Uterus (tissue), 4 donors: ENCODE measurements at regions of chr4 and their contacts with region 1.

Region 1: DNA sequence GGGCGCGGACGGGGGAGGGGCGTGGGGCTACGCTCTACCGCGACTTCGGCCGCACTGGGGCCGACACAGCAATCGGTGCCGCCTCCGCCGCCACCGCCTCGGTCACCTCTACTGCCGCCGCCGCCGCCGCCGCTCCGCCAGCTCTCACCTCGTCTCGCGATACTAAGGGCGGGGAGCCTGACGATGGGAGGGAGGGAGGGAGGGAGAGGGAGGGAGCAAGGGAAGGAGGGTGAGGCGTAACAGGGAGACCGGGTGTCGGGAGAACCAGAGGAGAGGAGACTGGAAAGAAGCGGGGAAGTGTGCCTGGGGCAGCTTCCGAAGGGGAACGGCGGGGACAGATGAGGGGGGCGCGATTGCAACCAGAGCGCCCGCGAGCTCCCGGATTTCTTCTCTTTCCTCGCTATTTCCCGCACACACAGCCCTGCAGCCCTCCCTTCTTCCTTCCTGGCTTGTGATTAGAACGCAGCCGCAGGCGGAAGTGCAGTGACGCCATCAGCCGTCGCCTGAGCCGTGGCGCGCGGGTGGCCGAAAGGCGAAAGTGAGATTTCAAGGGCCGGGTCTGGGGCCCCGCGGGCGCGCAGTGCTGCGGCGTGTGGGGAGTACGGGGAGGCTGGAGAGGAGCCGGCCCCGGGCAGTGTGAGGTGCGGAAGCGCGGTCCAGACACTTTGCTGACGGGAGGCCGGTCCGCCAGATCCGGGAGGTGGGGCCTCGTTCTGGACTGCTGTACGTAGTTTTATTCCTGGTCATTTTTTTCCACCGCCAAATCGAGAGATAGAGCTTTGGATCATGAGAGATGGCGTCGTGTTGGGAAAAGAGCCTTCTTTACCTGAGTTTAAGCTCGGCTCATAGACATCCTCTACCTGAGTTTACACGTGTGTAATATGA is at the start of gene ANKRD17:
- DNase-seq: peak; percentile 91
- H3K4me3 ChIP-seq: peak within 1 kb of the TSS; percentile 62 to 98
- H3K27ac ChIP-seq: peak within 1 kb of the TSS; percentile 96 to 97
- H3K4me1 ChIP-seq: peaks cover 0 to 9% of the 10 kb centered on the region in 2 donors
- H3K27me3 ChIP-seq: no peaks in the 10 kb centered on the region
- CTCF ChIP-seq: peak in 3 of 4 experiments; percentile 31 to 56 (median 39)
- POLR2A ChIP-seq: peak; percentile 36 to 60
- total RNA-seq, gene ANKRD17: 25.0 to 75.6 (median 56.7) TPM

Region 2: DNA sequence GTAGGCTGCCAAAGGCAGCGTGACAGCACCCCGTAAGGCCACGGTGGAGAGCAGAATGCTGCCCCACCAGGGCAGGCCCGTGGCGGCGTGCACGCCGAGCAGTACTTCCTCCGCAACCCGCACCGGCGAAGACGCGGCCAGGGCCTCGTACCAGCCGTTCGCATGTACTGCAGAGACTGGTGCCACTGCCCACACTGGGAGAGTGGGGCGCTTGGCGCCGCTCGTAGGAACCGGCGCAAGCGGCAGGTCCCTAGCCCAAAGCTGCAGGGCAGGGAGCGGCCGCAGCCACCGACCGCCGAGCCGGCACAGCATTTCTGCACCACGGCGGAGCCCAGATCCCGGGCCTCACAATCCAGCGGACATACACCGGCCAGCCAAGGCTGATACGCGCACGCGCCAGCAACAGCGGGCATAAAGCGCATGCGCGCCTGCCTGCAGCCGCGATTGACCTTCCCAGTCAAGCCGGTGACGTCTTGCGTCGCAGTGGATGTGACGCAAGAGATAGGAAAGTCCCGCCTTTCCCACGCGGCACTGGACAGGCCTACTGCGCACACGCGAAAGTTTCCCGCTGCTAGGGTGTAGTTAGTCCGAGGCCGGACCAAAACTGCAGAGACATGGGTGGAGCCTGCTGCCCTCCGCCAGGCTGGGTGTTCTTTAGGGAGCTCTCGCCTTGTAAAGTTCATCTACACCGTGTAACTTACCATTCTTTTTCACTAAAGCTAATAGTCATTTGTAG is 189.4 kb before region 1 on chr4 and contains the start of gene COX18:
- intact Hi-C with region 1: loop called (anchors 5 kb)
- DNase-seq: peak; percentile 98 to 99
- H3K4me3 ChIP-seq: peak within 1 kb of the TSS; percentile 81 to 89
- H3K27ac ChIP-seq: peak within 1 kb of the TSS; percentile 90 to 94
- H3K4me1 ChIP-seq: no peaks in the 10 kb centered on the region
- H3K27me3 ChIP-seq: no peaks in the 10 kb centered on the region
- CTCF ChIP-seq: peak in 1 of 4 experiments; percentile 25
- POLR2A ChIP-seq: peak; percentile 92 to 93
- total RNA-seq, gene COX18: 5.6 to 33.5 (median 16.0) TPM